ENCODE measurements at regions of chr13 and their contacts with region 1.

Region 1: DNA sequence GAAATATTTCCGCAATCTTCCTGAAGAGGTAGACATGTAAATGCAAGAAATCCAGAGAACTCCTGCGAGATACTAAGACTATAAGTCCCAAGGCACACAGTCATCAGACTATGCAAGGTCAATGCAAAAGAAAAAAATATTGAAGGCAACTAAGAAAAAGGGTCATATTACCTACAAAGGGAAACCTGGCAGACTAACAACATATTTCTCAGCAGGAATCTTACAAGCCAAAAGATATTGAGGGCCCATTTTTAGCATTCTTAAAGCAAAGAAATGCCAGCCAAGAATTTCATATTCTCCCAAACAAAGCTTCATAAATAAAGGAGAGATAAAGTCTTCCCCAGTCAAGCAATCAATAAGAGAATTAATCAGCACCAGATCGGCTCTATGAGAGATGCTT is 298.5 kb upstream of the ATXN8OS start:
- DNase-seq: no peak
- ATAC-seq: no peak
- H3K4me3 ChIP-seq: no peak overlapping the region
- H3K27ac ChIP-seq: no peak overlapping the region
- H3K4me1 ChIP-seq: no peaks in the 10 kb centered on the region
- H3K27me3 ChIP-seq: no peaks in the 10 kb centered on the region
- CTCF ChIP-seq: no peak
- EP300 ChIP-seq: no peak
- POLR2A ChIP-seq: no peak
- RAD21 ChIP-seq: no peak

Region 2: GRCh38 chr13:69999875-70000274 is 190.7 kb after region 1 on chr13:
- CTCF ChIA-PET with region 1: no interaction called
- POLR2A ChIA-PET with region 1: no interaction called
- in situ Hi-C with region 1: loop called (anchors 10 kb)
- intact Hi-C with region 1: no loop called
- DNase-seq: no peak
- ATAC-seq: no peak
- H3K4me3 ChIP-seq: no peak overlapping the region
- H3K27ac ChIP-seq: no peak overlapping the region
- H3K4me1 ChIP-seq: no peaks in the 10 kb centered on the region
- H3K27me3 ChIP-seq: no peaks in the 10 kb centered on the region
- CTCF ChIP-seq: no peak
- EP300 ChIP-seq: no peak
- POLR2A ChIP-seq: no peak
- RAD21 ChIP-seq: no peak

Measured in K562 (cell line).